Esophagus muscularis mucosa (tissue), 4 donors: ENCODE measurements at regions of chr11 and their contacts with region 1.

Region 1: DNA sequence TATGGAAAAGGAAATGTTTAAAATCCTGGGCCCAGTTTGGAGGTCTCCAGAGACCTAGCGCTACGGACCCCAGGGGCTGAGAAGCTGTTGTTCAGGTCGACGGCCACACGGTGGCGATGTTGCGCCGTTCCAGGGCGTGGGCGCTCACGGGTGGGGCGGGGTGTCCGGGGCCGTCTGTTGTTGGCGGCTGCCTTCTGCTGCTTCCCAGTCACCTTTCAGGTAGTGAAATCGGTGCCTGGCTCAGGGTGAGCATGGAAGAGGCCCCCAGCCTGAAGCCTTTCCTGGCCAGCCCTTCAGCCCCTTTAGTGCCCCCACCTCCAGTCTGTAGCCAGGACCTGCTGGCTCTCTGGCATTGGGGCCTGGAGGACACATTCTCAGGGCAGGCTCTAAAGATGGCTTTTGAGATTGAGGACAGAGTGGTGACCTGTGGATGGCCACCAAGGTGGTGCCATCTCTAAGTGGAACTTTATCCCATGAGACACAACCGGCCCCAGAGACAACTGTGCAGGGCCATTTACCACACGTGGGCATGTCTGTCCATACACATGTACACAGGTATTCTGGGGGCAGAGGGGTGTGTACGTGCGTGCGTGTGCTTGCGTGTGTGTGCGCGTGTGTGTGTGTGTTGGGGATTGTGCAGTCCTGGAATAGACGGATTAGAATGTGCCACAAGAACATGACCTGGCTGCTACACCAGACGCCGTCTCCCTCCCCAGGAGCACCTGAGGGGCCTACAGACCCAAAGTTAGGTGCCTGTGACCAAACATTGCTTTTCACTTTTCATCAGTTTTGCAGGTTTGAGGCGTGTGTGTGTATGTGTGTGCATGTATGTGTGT is 53.8 kb downstream of the ST14 start:
- DNase-seq: peak; percentile 88
- H3K4me3 ChIP-seq: peak overlapping the region in 1 of 4 donors; percentile 32
- H3K27ac ChIP-seq: no peak overlapping the region
- H3K4me1 ChIP-seq: peaks cover 6 to 9% (median 6%) of the 10 kb centered on the region in 4 donors
- H3K27me3 ChIP-seq: peaks cover 0 to 9% (median 0%) of the 10 kb centered on the region in 4 donors
- CTCF ChIP-seq: peak in 2 of 3 experiments; percentile 88 to 93
- EP300 ChIP-seq: no peak
- POLR2A ChIP-seq: no peak

Region 2: GRCh38 chr11:130166457-130166784 is 46.9 kb before region 1 on chr11:
- intact Hi-C with region 1: no loop called
- DNase-seq: no peak
- H3K4me3 ChIP-seq: no peak overlapping the region
- H3K27ac ChIP-seq: no peak overlapping the region
- H3K4me1 ChIP-seq: peaks cover 0 to 3% (median 0%) of the 10 kb centered on the region in 4 donors
- H3K27me3 ChIP-seq: peaks cover 0 to 31% (median under 1%) of the 10 kb centered on the region in 4 donors
- CTCF ChIP-seq: no peak
- EP300 ChIP-seq: no peak
- POLR2A ChIP-seq: no peak

Region 3: DNA sequence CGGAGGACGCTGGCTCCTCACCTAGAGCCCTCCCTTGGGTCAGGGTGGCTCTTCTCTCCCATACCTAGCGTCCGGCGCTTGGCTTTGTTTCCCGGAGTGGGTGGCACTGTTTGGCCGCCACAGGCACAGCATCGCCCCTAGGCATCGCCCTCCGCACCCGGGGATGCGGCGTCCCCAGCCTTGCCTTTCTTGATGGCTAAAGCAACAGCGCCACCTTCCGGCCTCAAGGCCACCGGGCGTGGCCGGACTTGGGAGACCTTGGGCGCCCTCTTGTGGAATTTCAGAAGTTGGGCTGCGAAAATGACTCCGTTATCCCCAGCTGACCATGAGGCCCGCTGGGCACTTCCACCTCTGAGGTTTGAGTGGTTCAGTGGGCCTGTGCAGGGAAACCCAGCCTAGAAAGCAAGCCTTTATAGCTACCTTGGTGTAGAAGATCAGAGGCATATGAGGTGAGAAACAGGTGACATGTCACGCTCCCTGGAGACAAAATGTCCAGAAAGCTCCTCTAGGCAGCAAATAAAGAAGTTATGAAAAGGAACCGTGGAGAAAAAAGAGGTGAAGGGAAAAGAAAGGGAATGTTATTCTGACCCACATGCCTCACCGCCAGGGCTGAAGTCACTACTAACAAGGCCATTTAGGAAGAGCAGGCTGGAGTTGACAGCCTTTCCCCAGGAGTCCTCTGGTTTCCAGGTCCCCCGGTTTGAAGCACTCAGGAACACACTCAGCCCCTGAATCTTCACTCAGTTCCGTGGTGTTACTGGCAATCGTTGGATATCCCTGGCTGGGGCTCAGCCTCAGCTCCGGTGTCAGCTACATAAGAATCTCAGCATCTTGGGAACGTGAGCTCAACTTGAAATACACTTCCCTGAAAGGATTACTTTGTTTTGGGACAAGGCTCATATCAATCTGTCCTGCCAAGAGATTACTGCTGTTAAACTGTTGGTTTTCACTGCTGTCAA is 648.8 kb after region 1 on chr11:
- intact Hi-C with region 1: loop called (anchors 5 kb)
- DNase-seq: peak; percentile 96
- H3K4me3 ChIP-seq: peak overlapping the region; percentile 16 to 36 (median 26)
- H3K27ac ChIP-seq: peak overlapping the region in 2 of 4 donors; percentile 38 to 40
- H3K4me1 ChIP-seq: peaks cover 19 to 43% (median 38%) of the 10 kb centered on the region in 4 donors
- H3K27me3 ChIP-seq: no peaks in the 10 kb centered on the region
- CTCF ChIP-seq: peak in 2 of 3 experiments; percentile 100
- EP300 ChIP-seq: no peak
- POLR2A ChIP-seq: no peak